Lower leg skin (tissue), 4 donors: ENCODE measurements at regions of chr9 and their contacts with region 1.

Region 1: DNA sequence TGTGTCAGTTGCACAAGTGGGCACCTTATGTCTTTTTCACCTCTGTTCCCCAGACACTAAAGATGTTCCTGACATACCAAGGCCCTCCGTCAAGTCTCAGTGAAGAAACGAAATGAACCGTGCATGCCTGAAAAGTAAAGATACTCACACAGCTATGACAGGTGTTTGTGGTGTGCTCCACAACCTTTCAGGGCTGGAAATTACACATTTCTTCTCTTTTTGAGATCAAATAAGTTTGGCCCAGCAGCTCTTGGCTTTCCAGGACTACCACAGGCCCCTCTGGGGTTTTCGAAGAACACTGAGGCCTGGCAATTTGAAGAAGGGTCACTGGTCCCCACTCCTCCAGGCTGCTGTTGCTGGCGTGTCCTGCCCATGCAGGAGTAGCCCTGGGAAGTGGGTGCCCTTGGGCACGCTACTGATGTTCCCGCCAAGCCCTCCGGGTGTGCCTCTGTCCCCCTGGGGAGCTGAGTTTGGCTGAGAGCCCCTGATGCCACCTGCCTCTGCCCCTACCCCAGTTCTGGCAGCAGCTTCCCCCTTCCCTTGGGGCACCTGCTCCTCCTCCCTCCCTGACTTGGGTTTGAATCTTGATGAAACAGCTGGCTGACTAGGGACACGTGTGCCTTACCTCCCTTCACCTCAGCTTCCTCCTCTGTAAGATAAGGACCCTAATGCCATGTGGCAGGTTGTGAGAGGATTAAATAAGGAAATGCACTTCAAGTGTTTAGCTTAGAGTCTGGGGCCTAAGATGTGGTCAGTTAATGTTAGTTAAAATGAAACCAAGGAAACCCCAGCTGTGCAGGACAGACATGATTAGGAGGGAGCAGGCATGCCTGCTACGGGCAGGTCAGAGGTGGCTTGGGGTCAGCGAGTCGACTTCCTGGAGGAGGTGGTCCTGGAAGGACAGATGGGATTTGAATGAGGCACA is 49.1 kb upstream of the GADD45G start:
- DNase-seq: peak in 1 of 2 donors; percentile 72
- H3K4me3 ChIP-seq: no peak overlapping the region
- CTCF ChIP-seq: no peak
- POLR2A ChIP-seq: no peak

Region 2: GRCh38 chr9:89323390-89323789 is 232.3 kb before region 1 on chr9:
- intact Hi-C with region 1: loop called (anchors 10 kb)
- DNase-seq: no peak
- H3K4me3 ChIP-seq: no peak overlapping the region
- CTCF ChIP-seq: no peak
- POLR2A ChIP-seq: no peak